Heart left ventricle (tissue), 16 donors: ENCODE measurements at regions of chr7 and their contacts with region 1.

Region 1: DNA sequence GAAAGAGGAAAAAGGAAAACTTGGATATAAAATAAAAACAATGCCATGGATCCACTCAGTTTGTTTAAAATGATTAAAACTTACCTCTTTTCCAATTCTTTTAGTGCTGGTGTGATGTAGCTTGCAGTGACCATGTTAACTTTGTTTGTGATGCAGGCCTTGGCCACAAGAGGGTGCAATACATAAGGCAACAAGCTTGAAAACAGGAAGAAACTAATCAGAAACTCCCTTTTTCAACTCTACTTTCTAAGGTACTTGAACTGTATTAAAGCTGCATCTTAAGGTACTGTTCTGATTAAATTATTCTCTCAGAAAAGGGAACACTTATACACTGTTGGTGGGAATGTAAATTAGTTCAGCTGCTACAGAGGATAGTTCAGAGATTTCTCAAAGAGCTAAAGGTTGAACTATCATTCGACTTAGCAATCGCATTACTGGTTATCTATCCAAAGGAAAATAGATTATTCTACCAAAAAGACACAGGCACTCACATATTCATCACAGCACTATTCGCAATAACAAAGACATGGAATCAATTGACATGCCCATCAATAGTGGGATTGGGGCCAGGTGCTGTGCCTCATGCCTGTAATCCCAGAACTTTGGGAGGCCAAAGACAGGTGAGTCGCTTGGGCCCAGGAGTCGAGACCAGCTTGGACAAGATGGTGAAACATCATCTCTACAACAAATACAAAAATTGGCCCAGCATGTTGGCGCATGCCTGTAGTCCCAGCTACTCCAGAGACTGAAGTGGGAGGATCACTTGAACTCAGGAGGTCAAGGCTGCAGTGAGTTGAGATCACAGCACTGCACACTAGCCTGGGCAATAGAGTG is 50.9 kb downstream of the AASS start:
- DNase-seq: peak in 4 of 5 donors; percentile 23 to 56 (median 40)
- ATAC-seq: no peak
- H3K4me3 ChIP-seq: no peak overlapping the region
- H3K27ac ChIP-seq: no peak overlapping the region
- H3K4me1 ChIP-seq: no peaks in the 10 kb centered on the region
- H3K27me3 ChIP-seq: no peaks in the 10 kb centered on the region
- CTCF ChIP-seq: peak; percentile 62 to 91 (median 82)
- POLR2A ChIP-seq: no peak

Region 2: DNA sequence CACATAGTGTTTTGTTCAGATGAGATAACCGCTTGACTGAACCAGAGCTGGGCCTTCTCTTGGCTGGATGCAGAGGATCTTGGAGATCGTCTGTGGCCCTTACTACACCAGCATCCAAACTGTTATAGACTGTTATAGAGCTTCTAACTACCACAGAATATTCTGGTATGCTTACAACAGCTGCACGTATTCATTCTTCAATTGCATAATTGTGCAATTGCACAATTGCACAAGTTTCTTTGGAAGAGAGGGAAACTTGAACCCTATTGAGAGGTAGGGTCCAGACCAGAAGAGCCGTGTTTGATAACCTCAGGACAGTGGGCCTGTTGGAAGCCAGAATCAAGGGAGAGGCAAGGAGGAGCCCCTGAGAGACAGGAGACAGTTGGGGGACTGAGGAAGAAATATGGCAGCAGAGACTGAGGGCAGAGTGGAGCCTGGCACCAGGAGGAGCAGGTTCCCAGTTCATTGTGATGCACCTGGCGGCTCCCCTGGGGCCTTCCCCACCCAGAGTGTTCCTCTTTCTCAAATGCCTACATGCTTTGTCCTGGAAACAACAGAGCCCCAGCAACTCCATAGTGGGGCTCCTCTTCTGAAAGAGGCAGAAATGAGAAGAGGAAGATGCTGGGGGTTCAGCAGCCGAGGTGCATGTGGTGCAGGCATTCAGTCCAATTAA is 156.1 kb before region 1 on chr7:
- intact Hi-C with region 1: no loop called
- DNase-seq: no peak
- ATAC-seq: no peak
- H3K4me3 ChIP-seq: no peak overlapping the region
- H3K27ac ChIP-seq: no peak overlapping the region
- H3K4me1 ChIP-seq: no peaks in the 10 kb centered on the region
- H3K27me3 ChIP-seq: no peaks in the 10 kb centered on the region
- CTCF ChIP-seq: no peak
- POLR2A ChIP-seq: no peak

Region 3: DNA sequence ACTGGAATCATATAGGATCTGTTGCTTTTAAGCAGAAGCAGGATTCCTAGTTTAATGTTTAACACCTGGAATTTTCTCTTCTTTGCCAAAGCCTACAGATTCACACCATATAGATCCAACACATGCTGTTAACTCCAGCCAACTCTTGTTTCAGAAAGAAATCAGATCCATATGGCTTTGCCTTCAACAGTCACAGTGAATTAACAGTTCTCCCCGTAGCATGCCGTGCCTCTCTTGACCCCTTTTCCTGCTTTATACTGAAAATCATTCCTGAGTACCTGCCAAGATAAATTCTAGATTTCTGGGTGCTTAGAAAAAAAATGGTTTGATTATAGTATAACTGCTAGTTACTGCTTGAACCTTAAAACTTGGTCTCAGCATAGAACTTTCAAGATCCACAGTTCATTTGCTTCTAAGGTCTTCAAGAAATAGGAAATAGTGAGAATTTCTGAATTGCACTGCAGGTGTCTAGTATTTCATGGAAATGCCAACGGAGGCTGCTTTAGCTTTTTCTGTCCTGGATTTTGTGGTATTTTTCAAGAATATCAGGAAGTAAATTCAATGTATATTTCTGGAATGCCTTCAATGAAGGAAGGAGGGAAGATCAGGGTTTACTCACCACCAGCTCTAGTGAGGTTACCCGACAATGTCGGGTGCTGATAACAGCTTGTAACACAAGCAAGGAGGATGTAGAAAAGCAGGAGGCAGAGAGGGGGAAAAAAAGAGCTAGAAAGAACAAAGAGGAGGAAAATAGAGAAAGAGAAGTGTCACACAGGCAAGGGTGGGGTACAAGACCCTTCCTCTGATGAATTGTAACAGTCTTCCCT is 44.3 kb after region 1 on chr7:
- intact Hi-C with region 1: loop called in 2 of 10 experiments (anchors 5 to 10 kb)
- DNase-seq: no peak
- ATAC-seq: peak in 1 of 4 donors; percentile 56
- H3K4me3 ChIP-seq: peak overlapping the region; percentile 9 to 52 (median 44)
- H3K27ac ChIP-seq: peak overlapping the region in 6 of 12 donors; percentile 4 to 58 (median 31)
- H3K4me1 ChIP-seq: peaks cover 0 to 41% (median 17%) of the 10 kb centered on the region in 12 donors
- H3K27me3 ChIP-seq: no peaks in the 10 kb centered on the region
- CTCF ChIP-seq: no peak
- POLR2A ChIP-seq: no peak

Region 4: GRCh38 chr7:122143751-122144711 is 50.9 kb after region 1 on chr7 and contains the start of gene AASS:
- intact Hi-C with region 1: loop called in 2 of 10 experiments (anchors 5 to 10 kb)
- DNase-seq: peak; percentile 97 to 99 (median 98)
- ATAC-seq: peak; percentile 98 to 100 (median 99)
- H3K4me3 ChIP-seq: peak within 1 kb of the TSS; percentile 43 to 98 (median 87)
- H3K27ac ChIP-seq: peak within 1 kb of the TSS; percentile 83 to 99 (median 93)
- H3K4me1 ChIP-seq: peaks cover 0 to 39% (median 14%) of the 10 kb centered on the region in 12 donors
- H3K27me3 ChIP-seq: no peaks in the 10 kb centered on the region
- CTCF ChIP-seq: peak in 2 of 12 donors; percentile 17 to 29
- POLR2A ChIP-seq: peak in 1 of 2 donors; percentile 70
- total RNA-seq, gene AASS: 24.2 to 61.3 (median 32.2) TPM

Region 5: GRCh38 chr7:122528879-122529481 is 435.8 kb after region 1 on chr7:
- intact Hi-C with region 1: loop called (anchors 5 to 10 kb)
- DNase-seq: no peak
- ATAC-seq: no peak
- H3K4me3 ChIP-seq: no peak overlapping the region
- H3K27ac ChIP-seq: no peak overlapping the region
- H3K4me1 ChIP-seq: no peaks in the 10 kb centered on the region
- H3K27me3 ChIP-seq: no peaks in the 10 kb centered on the region
- CTCF ChIP-seq: peak; percentile 47 to 73 (median 58)
- POLR2A ChIP-seq: no peak